ENCODE measurements at regions of chr5 and their contacts with region 1.

Region 1: DNA sequence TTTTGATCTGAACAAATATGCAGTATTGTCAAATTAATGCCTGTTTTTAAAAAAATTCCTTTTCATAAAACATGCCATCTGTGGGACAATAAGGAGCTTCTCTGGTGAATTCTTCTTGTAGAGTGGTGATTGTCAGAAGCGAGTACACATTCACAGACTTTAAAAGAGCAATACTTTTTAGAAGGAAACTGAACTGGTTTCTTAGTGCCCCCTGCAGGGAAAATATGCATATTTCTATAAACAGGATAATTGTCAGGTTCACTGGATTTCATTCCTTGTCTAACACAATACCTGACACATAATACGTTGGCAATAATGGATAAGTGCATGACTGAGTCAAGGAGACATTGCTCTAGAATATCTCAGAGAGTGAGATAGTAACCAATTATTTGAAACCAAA is 133.7 kb downstream of the KIF4B start:
- DNase-seq: no peak
- H3K4me3 ChIP-seq: no peak overlapping the region
- H3K27ac ChIP-seq: no peak overlapping the region
- H3K4me1 ChIP-seq: no peaks in the 10 kb centered on the region
- H3K27me3 ChIP-seq: peaks cover 11% of the 10 kb centered on the region; the same call in 1 of the 2 replicates
- CTCF ChIP-seq: no peak; the same call in 1 of the 2 replicates

Region 2: DNA sequence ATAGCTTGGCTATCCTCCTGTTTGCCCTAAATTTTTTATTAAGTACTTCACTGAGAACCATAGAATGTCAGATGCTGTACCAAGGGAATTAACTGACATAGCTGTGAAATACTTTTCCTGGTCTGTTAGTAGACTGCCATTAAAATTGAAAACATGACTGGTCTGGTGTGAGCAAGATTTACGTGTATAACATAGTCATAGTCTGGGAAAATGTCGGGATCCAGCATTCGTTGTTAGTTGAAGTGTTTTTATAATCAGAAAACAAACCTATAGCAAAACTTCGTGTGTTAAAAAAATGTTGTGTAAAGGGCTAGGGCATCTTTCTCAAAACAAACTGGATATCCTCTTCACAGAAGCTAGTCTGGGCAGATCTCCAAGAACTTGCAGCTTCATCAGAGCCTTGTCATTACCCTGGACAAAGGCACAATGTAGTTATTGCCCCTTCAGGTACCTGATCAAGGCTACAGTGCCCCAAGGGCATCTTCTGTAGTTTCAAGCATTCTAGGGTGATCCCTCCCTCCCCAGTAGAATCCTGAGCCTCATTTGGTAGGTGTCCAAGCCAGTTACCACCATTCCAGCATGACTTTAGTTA is 725.5 kb after region 1 on chr5:
- CTCF ChIA-PET with region 1: interaction called, 10 read pairs
- POLR2A ChIA-PET with region 1: no interaction called
- intact Hi-C with region 1: no loop called
- DNase-seq: no peak
- H3K4me3 ChIP-seq: no peak overlapping the region
- H3K27ac ChIP-seq: no peak overlapping the region
- H3K4me1 ChIP-seq: no peaks in the 10 kb centered on the region
- H3K27me3 ChIP-seq: no peaks in the 10 kb centered on the region
- CTCF ChIP-seq: no peak

Measured in PC-9 (cell line).